Activated T-helper 2 cell treated with anti-CD3 and anti-CD28 coated beads, Interferon-gamma antibody, Interleukin-2, Interleukin-4, amounts not matched to agents 10 μg/mL and 5 μg/mL and 100 μg/mL, durations not matched to agents 14 hours and 24 hours and 36 hours (primary cell): ENCODE measurements at regions of chr6 and their contacts with region 1.

Region 1: DNA sequence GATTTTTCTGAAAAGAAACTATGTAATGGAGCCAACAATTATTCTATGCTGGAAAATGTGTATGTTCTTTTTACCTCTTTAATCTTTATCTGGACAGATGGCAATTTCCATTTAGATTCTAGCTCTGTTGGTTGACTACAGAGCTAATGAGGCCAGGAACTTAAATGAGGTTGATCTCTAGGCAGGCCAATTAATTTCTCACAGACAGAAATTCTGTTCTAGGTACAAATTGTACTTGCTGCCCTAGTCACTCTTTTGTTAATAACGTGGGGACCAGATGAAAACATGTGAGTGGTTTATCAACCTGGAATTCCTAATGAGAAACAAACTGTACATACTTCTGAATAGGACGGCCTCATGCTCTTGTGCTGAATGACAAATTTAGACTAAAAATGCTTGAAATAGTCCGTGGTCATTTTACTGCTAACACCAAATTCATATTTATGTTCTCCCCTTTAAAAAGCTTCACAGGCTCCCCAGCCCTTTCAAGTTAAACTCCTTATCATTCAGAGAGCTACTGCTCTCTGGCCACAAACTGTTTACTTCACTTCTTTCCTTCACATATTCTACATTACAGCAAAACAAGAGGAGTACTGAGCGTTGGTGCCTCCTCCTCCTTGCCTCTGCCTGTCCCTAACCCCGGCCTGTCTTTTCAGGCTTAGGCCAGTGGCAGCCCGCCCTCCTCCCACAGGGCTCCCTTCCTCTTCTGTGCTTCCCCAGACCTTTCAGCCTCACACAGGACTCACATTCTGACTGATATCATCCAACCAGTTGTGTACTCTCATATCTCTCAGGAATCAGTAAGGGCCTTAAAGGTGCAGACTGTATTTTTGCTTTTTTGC is 41.4 kb downstream of the DTNBP1 start:
- DNase-seq: no peak
- H3K4me3 Mint-ChIP-seq: peak overlapping the region; percentile 14
- H3K27ac Mint-ChIP-seq: peak overlapping the region; percentile 69
- H3K4me1 Mint-ChIP-seq: peaks cover 47% of the 10 kb centered on the region
- H3K27me3 Mint-ChIP-seq: no peaks in the 10 kb centered on the region

Region 2: DNA sequence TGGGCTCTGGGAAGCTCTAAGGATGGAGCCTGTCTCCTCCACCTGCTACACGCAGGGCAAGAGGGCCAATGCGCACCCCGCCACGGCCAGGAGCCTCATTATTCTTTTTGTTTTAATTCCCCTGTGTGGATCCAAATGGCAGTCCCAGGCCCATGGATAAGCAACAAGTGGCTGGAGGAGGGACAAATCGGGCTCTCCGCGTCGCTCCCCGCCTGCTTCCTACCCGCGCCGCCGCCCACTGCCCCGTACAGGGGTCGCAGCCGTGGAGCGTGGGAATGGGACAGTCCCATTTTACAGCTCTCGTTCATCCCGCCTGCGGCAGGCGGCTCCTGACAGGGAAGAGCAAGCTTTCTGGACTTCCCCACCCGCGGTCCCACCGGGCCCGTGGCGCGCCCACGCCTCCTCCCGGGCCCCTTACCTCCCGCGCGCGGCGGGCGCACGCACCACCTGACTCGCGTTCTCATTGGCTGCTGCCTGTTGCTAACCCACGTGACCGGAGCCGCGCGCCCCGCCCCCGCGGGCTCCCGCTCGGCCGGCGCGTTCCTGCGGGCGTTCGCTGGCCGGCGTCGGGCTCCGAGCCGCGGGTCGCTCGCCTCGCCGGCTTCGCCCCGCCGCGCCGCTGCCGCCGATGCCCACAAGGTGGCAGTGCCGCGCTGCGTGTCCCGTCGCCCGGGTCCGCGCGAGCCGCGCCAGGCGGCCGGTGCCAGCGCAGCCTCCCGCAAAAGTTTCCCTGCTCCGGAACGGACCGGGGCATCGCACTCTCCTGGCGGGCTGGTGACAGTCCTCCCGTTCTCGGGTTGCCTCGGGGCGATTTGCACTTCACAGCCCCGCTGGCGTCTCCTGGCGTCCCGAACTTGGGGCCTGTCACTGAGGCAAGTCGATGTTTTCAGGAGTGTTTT is 1410.5 kb before region 1 on chr6:
- intact Hi-C with region 1: loop called (anchors 10 kb)
- DNase-seq: peak; percentile 92
- H3K4me3 Mint-ChIP-seq: peak overlapping the region; percentile 78
- H3K27ac Mint-ChIP-seq: peak overlapping the region; percentile 83
- H3K4me1 Mint-ChIP-seq: peaks cover 40% of the 10 kb centered on the region
- H3K27me3 Mint-ChIP-seq: no peaks in the 10 kb centered on the region

Region 3: GRCh38 chr6:15299430-15300131 is 321.8 kb before region 1 on chr6:
- intact Hi-C with region 1: loop called (anchors 10 kb)
- DNase-seq: peak; percentile 46
- H3K4me3 Mint-ChIP-seq: peak overlapping the region; percentile 53
- H3K27ac Mint-ChIP-seq: peak overlapping the region; percentile 68
- H3K4me1 Mint-ChIP-seq: peaks cover 74% of the 10 kb centered on the region
- H3K27me3 Mint-ChIP-seq: no peaks in the 10 kb centered on the region

Region 4: DNA sequence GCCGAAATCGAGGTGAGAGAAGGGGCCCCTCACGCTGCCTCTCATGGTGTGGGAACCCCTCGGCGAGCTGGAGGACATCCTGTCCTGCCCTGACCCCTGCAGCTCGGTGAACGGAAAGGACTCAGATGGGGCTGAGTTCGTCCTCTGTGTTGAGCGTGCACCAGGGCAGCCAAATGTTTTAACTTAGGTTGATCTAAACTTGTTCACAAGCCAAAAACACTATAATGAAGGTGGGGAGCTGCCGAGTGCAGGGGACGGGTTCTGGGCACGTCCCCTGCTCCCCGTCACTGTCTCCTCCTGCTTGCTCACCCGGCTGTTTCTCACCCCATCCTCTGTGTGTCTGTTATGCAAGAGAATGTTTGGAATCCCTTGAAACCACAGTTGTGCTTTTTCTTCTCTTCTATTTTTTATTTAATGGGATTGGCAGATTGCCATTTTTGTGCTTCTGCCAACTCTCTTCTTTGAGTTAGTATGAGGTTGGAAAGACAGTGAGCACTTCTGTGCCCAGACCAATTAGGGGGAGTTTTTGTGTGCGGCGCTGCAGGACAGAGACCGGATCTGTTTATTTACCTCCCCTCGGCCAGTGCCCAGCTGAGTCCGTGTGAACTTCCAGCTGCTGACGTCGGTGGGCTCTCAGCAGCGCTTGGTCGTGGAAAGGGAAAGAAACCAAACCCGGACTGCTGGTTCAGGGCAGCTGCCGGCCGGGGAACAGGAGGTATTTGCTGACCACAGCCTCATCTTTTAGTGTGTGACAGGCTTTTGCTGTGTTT is 116.7 kb before region 1 on chr6:
- intact Hi-C with region 1: loop called (anchors 5 kb)
- DNase-seq: no peak
- H3K4me3 Mint-ChIP-seq: no peak overlapping the region
- H3K27ac Mint-ChIP-seq: no peak overlapping the region
- H3K4me1 Mint-ChIP-seq: peaks cover 5% of the 10 kb centered on the region
- H3K27me3 Mint-ChIP-seq: no peaks in the 10 kb centered on the region

Region 5: GRCh38 chr6:15588971-15589634 is 32.3 kb before region 1 on chr6:
- intact Hi-C with region 1: loop called (anchors 5 kb)
- DNase-seq: no peak
- H3K4me3 Mint-ChIP-seq: no peak overlapping the region
- H3K27ac Mint-ChIP-seq: peak overlapping the region; percentile 38
- H3K4me1 Mint-ChIP-seq: peaks cover 22% of the 10 kb centered on the region
- H3K27me3 Mint-ChIP-seq: no peaks in the 10 kb centered on the region

Region 6: DNA sequence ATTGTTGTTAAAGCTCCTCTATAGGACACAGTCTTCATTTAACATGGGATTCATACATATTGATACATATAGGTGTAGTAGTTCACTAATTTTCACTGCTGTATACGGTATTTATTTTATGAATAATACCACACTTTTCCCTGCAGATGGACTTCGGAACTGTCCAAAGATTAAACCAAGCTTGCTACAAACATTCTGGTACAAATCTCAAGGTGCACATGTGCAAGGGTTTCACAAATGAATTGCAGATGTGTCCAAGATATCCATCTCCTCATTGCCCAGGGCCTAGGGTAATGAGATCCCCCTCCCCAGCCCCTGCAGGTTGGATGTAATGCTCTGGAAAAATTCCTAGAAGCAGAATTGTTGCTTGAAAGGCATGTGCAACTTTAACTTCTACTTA is 10.0 kb after region 1 on chr6:
- intact Hi-C with region 1: no loop called
- DNase-seq: no peak
- H3K4me3 Mint-ChIP-seq: no peak overlapping the region
- H3K27ac Mint-ChIP-seq: no peak overlapping the region
- H3K4me1 Mint-ChIP-seq: peaks cover 35% of the 10 kb centered on the region
- H3K27me3 Mint-ChIP-seq: no peaks in the 10 kb centered on the region